Activated CD4-positive, alpha-beta T cell treated with anti-CD3 and anti-CD28 coated beads for 36 hours (primary cell): ENCODE measurements at regions of chr2 and their contacts with region 1.

Region 1: DNA sequence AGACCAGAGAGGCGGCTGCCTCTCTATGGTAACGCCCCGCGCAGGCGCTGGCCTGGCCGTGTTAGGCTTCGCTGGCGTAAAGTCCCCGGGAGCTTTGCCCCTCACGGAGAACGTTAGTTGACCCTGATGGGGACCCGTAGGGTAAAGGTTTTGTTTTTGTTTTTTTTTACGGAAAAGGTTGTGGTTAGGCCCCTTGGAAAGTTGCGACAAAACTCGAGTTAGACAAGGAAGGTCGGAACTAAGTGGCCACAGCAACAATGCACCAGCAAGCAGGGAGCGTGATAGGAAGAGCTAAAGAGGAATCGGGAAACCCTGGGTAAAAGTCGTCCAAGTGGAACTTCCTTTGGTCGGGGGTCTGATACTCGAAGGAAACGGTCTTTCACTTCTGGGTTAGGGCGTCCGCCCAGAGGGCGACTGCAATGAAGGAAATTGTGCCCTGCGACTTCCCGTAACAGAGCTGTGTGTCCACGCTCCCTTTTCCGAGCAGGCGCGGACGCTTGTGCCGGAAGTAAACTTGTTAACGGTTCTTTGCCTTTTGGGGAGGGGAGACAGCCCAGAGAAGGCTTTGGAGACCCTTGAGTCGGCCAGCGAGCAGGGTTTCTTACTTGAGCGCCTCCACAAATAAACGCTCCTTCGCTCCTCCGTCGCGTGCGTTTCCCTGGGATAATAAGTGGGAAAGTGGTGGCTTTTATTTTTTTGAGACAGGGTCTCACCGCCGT is 493 bp upstream of the CLASP1 start:
- DNase-seq: peak; percentile 97
- ATAC-seq: peak; percentile 95
- H3K4me3 Mint-ChIP-seq: peak overlapping the region; percentile 89
- H3K27ac Mint-ChIP-seq: peak overlapping the region; percentile 100
- H3K4me1 Mint-ChIP-seq: peaks cover 61% of the 10 kb centered on the region
- H3K27me3 Mint-ChIP-seq: no peaks in the 10 kb centered on the region

Region 2: DNA sequence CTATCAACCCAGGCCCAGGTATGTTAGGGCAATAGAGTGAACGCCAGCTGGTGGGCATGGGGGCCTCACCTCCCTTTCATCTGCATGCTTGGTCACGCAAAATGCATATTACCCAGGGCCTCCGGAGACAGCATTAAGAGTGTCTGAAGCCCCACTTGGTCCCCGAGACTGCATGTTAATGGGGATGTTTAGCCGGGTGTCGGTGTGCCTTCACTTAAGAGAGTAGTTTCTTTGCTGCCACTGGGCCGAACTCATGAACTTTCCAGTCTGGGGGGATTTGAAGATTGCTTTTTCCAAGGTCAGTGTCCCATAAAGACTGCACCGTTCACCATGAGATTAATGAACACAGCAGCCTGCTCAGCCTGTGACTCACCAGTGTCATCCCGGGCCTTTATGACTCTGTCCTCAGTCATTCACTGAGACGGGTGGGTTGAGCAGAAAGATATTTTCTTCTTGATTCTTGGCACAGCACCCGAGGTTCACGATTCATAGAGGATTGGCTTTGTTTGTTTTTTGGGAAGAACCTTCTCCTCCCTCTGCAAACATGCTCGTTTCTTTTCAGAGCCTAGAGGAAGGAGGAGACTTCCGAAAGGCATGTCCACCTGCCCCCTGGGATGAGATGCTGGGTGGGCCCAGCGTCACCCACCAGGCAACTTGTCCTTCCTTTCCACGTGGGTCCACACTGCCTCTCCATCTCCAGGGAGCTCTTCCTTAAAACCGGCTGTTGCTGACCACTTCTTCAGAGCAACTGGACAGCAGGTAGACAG is 715.0 kb before region 1 on chr2:
- CTCF ChIA-PET with region 1: no interaction called
- POLR2A ChIA-PET with region 1: no interaction called
- intact Hi-C with region 1: no loop called
- DNase-seq: no peak
- ATAC-seq: no peak
- H3K4me3 Mint-ChIP-seq: no peak overlapping the region
- H3K27ac Mint-ChIP-seq: no peak overlapping the region
- H3K4me1 Mint-ChIP-seq: peaks cover 3% of the 10 kb centered on the region
- H3K27me3 Mint-ChIP-seq: no peaks in the 10 kb centered on the region

Region 3: GRCh38 chr2:121400201-121400600 is 249.6 kb before region 1 on chr2:
- CTCF ChIA-PET with region 1: interaction called, 4 read pairs
- POLR2A ChIA-PET with region 1: no interaction called
- intact Hi-C with region 1: loop called in 1 of 2 experiments (anchors 5 kb)
- DNase-seq: no peak
- ATAC-seq: no peak
- H3K4me3 Mint-ChIP-seq: no peak overlapping the region
- H3K27ac Mint-ChIP-seq: no peak overlapping the region
- H3K4me1 Mint-ChIP-seq: peaks cover 2% of the 10 kb centered on the region
- H3K27me3 Mint-ChIP-seq: no peaks in the 10 kb centered on the region

Region 4: GRCh38 chr2:121596221-121597080 is 53.3 kb before region 1 on chr2:
- CTCF ChIA-PET with region 1: no interaction called
- POLR2A ChIA-PET with region 1: no interaction called
- intact Hi-C with region 1: loop called (anchors 2 kb)
- DNase-seq: peak; percentile 44
- ATAC-seq: peak; percentile 90
- H3K4me3 Mint-ChIP-seq: peak overlapping the region; percentile 64
- H3K27ac Mint-ChIP-seq: peak overlapping the region; percentile 88
- H3K4me1 Mint-ChIP-seq: peaks cover 51% of the 10 kb centered on the region
- H3K27me3 Mint-ChIP-seq: no peaks in the 10 kb centered on the region

Region 5: GRCh38 chr2:121699421-121700333 is 49.9 kb after region 1 on chr2:
- CTCF ChIA-PET with region 1: interaction called, 10 read pairs
- POLR2A ChIA-PET with region 1: interaction called, 55 read pairs
- intact Hi-C with region 1: loop called (anchors 1 kb)
- DNase-seq: peak; percentile 95
- ATAC-seq: peak; percentile 98
- H3K4me3 Mint-ChIP-seq: peak overlapping the region; percentile 64
- H3K27ac Mint-ChIP-seq: peak overlapping the region; percentile 95
- H3K4me1 Mint-ChIP-seq: peaks cover 44% of the 10 kb centered on the region
- H3K27me3 Mint-ChIP-seq: no peaks in the 10 kb centered on the region

Region 6: GRCh38 chr2:121736462-121737341 is 86.9 kb after region 1 on chr2 and contains the start of gene NIFK:
- CTCF ChIA-PET with region 1: no interaction called
- POLR2A ChIA-PET with region 1: interaction called, 5 read pairs
- intact Hi-C with region 1: loop called (anchors 1 kb)
- DNase-seq: peak; percentile 100
- ATAC-seq: peak; percentile 91
- H3K4me3 Mint-ChIP-seq: peak within 1 kb of the TSS; percentile 83
- H3K27ac Mint-ChIP-seq: peak within 1 kb of the TSS; percentile 97
- H3K4me1 Mint-ChIP-seq: peaks cover 40% of the 10 kb centered on the region
- H3K27me3 Mint-ChIP-seq: no peaks in the 10 kb centered on the region
- total RNA-seq, gene NIFK: 148 to 213 TPM

Region 7: GRCh38 chr2:121755236-121756111 is 105.7 kb after region 1 on chr2 and contains the start of gene TSN:
- CTCF ChIA-PET with region 1: interaction called, 7 read pairs
- POLR2A ChIA-PET with region 1: no interaction called
- intact Hi-C with region 1: loop called (anchors 1 kb)
- DNase-seq: peak; percentile 99
- ATAC-seq: peak; percentile 100
- H3K4me3 Mint-ChIP-seq: peak within 1 kb of the TSS; percentile 98
- H3K27ac Mint-ChIP-seq: peak within 1 kb of the TSS; percentile 93
- H3K4me1 Mint-ChIP-seq: peaks cover 30% of the 10 kb centered on the region
- H3K27me3 Mint-ChIP-seq: no peaks in the 10 kb centered on the region
- total RNA-seq, gene TSN: 44.0 to 71.2 TPM

Region 8: GRCh38 chr2:121955426-121955825 is 305.7 kb after region 1 on chr2:
- CTCF ChIA-PET with region 1: no interaction called
- POLR2A ChIA-PET with region 1: no interaction called
- intact Hi-C with region 1: no loop called
- DNase-seq: no peak
- ATAC-seq: no peak
- H3K4me3 Mint-ChIP-seq: no peak overlapping the region
- H3K27ac Mint-ChIP-seq: no peak overlapping the region
- H3K4me1 Mint-ChIP-seq: no peaks in the 10 kb centered on the region
- H3K27me3 Mint-ChIP-seq: peaks cover 2% of the 10 kb centered on the region